HEK293 (cell line): ENCODE measurements at regions of chr11 and their contacts with region 1.

Region 1: GRCh38 chr11:125345421-125346178 is 150.5 kb downstream of the FEZ1 start:
- H3K4me3 ChIP-seq: no peak overlapping the region
- H3K27ac ChIP-seq: no peak overlapping the region
- H3K4me1 ChIP-seq: no peaks in the 10 kb centered on the region
- CTCF ChIP-seq: peak; percentile 27; the same call in 1 of the 2 replicates

Region 2: DNA sequence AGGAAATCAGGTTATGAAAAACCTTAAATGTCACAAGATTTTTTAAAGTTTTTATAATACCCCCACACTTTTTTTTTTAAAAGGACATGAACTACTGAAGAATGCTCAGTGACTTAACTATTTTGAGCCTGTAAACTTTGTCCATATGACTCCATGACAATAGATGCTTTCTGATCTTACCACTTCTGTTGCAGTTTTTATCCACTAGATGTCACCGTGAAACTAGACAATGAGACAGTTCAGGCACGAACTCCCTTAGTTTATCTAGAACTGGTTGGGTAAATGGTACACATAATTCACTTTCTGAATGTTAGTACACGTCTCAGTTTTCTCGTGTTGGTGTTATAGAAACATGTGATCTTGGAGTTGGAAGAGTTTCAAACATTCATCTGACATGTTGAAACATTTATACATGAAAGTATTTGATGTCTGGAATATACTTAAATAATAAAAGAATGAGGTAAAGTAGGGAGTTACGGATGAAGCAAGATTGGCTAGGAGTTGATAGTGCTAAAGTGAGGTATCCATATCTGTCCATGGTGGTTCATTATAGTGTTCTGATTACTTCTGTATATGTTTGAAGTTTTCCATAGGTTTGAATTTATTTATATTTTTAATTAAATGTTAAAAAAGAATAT is 383.5 kb before region 1 on chr11:
- CTCF ChIA-PET with region 1: interaction called, 10 read pairs
- POLR2A ChIA-PET with region 1: no interaction called
- H3K4me3 ChIP-seq: no peak overlapping the region
- H3K27ac ChIP-seq: no peak overlapping the region
- H3K4me1 ChIP-seq: no peaks in the 10 kb centered on the region
- CTCF ChIP-seq: peak; percentile 24; the same call in 1 of the 2 replicates

Region 3: GRCh38 chr11:125128450-125128849 is 217.2 kb before region 1 on chr11:
- CTCF ChIA-PET with region 1: no interaction called
- POLR2A ChIA-PET with region 1: no interaction called
- H3K4me3 ChIP-seq: no peak overlapping the region
- H3K27ac ChIP-seq: no peak overlapping the region
- H3K4me1 ChIP-seq: no peaks in the 10 kb centered on the region
- CTCF ChIP-seq: no peak

Region 4: DNA sequence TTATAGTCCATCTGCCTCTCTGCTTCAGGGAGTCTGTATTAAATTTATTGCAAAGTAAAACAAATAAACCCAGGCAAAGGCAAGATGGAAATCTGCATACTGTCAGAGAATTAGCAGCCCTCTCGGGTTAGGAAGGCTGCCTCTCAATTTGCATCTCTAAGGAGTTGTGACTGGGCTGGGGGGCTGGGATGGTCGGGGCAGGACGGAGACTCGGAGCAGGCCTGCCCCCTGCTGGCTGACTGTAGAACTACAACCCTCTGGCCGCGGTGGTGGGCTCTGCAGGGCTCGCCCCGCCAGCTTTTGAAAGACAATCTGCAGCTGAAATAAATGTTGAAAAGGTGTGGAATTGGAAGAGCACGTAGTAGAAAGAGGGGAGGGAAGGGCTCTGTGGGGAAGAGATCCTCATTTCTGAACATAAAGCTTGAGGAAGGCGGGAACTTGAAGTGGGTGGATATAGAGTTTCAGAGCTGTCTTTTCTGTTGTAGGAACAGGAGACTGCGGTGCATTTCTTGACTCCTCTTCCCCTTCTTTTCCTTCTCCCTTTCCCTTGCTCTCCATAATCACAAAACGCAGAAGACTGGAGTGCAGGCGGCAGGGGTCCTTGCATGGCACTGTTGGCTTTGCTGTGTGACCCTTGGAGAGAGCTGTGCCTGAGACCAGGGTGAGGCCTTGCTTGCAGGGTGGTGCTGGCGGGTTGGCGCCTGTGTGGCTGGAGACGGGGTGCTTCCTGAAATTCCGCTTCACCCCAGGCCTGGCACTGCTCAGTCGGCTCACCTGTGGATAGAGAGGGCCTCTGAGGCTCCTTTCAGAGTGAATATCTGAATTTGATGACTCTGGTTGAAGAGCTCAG is 203.7 kb before region 1 on chr11:
- CTCF ChIA-PET with region 1: interaction called, 20 read pairs
- POLR2A ChIA-PET with region 1: no interaction called
- H3K4me3 ChIP-seq: no peak overlapping the region
- H3K27ac ChIP-seq: no peak overlapping the region
- H3K4me1 ChIP-seq: no peaks in the 10 kb centered on the region
- CTCF ChIP-seq: peak; percentile 62; the same call in 1 of the 2 replicates

Region 5: DNA sequence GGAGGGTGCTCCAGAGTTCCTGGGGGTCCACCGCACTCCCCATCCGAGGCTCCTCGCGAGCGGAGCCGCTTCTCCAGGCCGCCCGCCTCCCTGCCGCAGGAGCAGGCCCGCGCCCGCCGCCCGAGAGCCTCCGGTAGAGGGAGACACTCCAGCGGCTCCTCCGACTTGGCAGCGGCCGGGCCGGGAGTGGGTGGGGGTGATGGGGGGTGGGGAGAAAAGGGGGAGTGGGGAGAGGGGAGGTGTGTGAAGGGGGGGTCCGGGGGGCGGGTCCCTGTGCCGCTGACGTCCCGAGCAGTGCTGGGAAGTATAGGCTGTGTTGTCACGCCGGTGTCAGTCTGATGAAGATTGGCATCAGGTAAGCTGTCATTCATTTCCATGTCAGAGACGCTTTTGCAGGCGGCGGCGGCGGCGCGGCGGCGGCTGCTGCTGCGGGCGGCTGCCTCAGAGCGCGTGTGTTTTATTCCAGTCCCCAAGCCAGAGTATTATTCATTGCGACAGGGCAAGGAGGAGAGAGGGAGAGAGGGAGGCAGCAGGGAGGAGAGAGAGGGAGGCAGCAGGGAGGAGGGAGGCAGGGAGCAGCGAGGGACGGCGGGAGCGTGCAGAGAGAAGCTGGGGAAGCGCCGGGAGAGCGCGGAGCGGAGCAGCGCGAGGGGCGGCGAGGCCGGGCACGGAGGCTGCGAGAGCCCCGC is 181.0 kb before region 1 on chr11 and contains the start of gene PKNOX2:
- CTCF ChIA-PET with region 1: interaction called, 14 read pairs
- POLR2A ChIA-PET with region 1: no interaction called
- H3K4me3 ChIP-seq: peak within 1 kb of the TSS; percentile 56
- H3K27ac ChIP-seq: peak within 1 kb of the TSS; percentile 72; the same call in 1 of the 2 replicates
- H3K4me1 ChIP-seq: peaks cover 9% of the 10 kb centered on the region
- CTCF ChIP-seq: no peak

Region 6: DNA sequence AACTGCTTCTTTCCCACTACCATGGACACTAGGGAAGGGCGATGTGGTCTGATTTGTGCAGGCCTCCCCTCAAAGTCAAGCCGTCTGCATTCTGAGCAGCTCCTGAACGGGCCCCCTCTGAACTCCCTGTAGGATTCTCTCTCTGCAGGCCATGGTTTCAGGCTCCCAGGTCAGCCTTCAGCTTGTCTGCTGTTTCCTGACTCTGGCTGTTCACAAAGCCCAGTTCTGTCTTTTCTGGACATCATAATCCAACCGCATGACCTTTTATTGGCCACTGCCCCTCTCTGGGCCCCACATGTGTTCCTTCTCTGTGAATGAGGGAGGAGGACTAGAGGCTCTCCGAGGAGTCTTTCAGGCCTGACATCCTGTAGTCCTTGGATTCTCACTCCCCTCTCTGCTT is 10.5 kb before region 1 on chr11:
- CTCF ChIA-PET with region 1: interaction called, 22 read pairs
- POLR2A ChIA-PET with region 1: no interaction called
- H3K4me3 ChIP-seq: no peak overlapping the region
- H3K27ac ChIP-seq: no peak overlapping the region
- H3K4me1 ChIP-seq: no peaks in the 10 kb centered on the region
- CTCF ChIP-seq: no peak

Region 7: GRCh38 chr11:125404776-125405435 is 59.3 kb after region 1 on chr11:
- CTCF ChIA-PET with region 1: interaction called, 20 read pairs
- POLR2A ChIA-PET with region 1: no interaction called
- H3K4me3 ChIP-seq: no peak overlapping the region
- H3K27ac ChIP-seq: no peak overlapping the region
- H3K4me1 ChIP-seq: no peaks in the 10 kb centered on the region
- CTCF ChIP-seq: peak; percentile 61

Region 8: GRCh38 chr11:125532668-125533067 is 187.1 kb after region 1 on chr11:
- CTCF ChIA-PET with region 1: no interaction called
- POLR2A ChIA-PET with region 1: no interaction called
- H3K4me3 ChIP-seq: no peak overlapping the region
- H3K27ac ChIP-seq: no peak overlapping the region
- H3K4me1 ChIP-seq: no peaks in the 10 kb centered on the region
- CTCF ChIP-seq: no peak